Tibial artery (tissue), 4 donors: ENCODE measurements at regions of chr20 and their contacts with region 1.

Region 1: GRCh38 chr20:23161968-23162696 is 76.0 kb upstream of the CD93 start:
- DNase-seq: peak; percentile 88 to 89
- H3K4me3 ChIP-seq: no peak overlapping the region
- H3K27ac ChIP-seq: peak overlapping the region; percentile 90 to 91
- H3K4me1 ChIP-seq: peaks cover 0 to 72% (median 46%) of the 10 kb centered on the region in 4 donors
- H3K27me3 ChIP-seq: no peaks in the 10 kb centered on the region
- CTCF ChIP-seq: no peak

Region 2: DNA sequence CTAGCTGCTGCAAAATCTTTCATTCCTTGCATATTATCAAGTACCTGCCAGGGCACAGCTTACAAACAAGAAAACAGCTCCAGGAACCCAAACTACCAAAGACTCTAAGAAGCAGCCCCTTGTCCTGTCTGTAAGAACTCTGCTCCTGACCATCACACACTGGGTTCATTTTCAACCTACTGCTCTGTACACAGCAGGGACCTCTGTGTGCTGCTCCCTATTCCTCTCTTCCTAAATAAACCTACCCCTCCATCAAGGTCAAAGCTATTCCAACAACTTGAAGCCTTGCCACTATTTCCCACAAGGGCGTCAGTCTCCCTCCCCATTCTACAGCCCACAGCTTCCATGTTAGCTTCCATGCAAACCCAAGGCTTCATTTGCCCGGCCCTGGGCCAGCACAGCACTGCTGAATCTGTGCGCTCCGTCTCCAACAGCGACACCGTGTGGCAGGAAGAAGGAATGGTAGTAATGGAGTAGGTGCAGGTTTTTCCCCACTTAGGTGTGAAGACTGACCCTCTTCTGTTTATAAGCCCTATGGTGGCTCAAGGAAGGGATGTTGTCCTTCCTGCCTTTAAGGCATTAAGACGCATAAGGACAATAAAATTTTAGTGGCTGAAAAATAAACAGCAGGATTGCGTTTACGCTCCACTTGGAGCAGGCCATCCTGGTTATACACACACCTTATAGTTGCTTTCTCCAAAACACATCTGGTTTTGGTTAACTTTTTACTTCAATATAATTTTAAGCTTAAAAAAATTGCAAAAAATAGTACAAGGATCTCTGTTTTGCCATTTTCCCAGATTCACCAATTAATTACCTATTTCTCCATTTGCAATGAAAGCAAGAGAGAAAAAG is 73.3 kb after region 1 on chr20:
- intact Hi-C with region 1: loop called (anchors 10 kb)
- DNase-seq: peak; percentile 73 to 81
- H3K4me3 ChIP-seq: no peak overlapping the region
- H3K27ac ChIP-seq: no peak overlapping the region
- H3K4me1 ChIP-seq: peaks cover 0 to 5% (median 0%) of the 10 kb centered on the region in 4 donors
- H3K27me3 ChIP-seq: no peaks in the 10 kb centered on the region
- CTCF ChIP-seq: peak; percentile 66 to 78